Panc1 (cell line): ENCODE measurements at regions of chr6 and their contacts with region 1.

Region 1: GRCh38 chr6:75786152-75786551 is 37.1 kb downstream of the MYO6 start:
- DNase-seq: no peak
- ATAC-seq: no peak
- H3K4me3 ChIP-seq: no peak overlapping the region
- H3K27ac ChIP-seq: no peak overlapping the region
- H3K4me1 ChIP-seq: no peaks in the 10 kb centered on the region
- H3K27me3 ChIP-seq: no peaks in the 10 kb centered on the region
- CTCF ChIP-seq: no peak

Region 2: GRCh38 chr6:75368151-75368779 is 417.9 kb before region 1 on chr6:
- CTCF ChIA-PET with region 1: no interaction called
- POLR2A ChIA-PET with region 1: no interaction called
- in situ Hi-C with region 1: no loop called
- intact Hi-C with region 1: no loop called
- DNase-seq: no peak
- ATAC-seq: peak; percentile 89
- H3K4me3 ChIP-seq: no peak overlapping the region
- H3K27ac ChIP-seq: peak overlapping the region; percentile 46
- H3K4me1 ChIP-seq: peaks cover 5% of the 10 kb centered on the region; the same call in 1 of the 2 replicates
- H3K27me3 ChIP-seq: no peaks in the 10 kb centered on the region
- CTCF ChIP-seq: peak; percentile 66

Region 3: GRCh38 chr6:75802366-75802765 is 16.2 kb after region 1 on chr6:
- CTCF ChIA-PET with region 1: no interaction called
- POLR2A ChIA-PET with region 1: interaction called, 12 read pairs
- in situ Hi-C with region 1: no loop called
- intact Hi-C with region 1: no loop called
- DNase-seq: no peak
- ATAC-seq: no peak
- H3K4me3 ChIP-seq: no peak overlapping the region
- H3K27ac ChIP-seq: no peak overlapping the region
- H3K4me1 ChIP-seq: no peaks in the 10 kb centered on the region
- H3K27me3 ChIP-seq: no peaks in the 10 kb centered on the region
- CTCF ChIP-seq: no peak